Activated T-helper 1 cell treated with anti-CD3 and anti-CD28 coated beads, Interleukin-12 subunit alpha, Interleukin-12 subunit beta, Interleukin-2, Interleukin-4 antibody, amounts not matched to agents 30 ng/mL and 10 ng/mL and 1 ng/mL, durations not matched to agents 14 hours and 24 hours and 36 hours (primary cell): ENCODE measurements at regions of chr2 and their contacts with region 1.

Region 1: DNA sequence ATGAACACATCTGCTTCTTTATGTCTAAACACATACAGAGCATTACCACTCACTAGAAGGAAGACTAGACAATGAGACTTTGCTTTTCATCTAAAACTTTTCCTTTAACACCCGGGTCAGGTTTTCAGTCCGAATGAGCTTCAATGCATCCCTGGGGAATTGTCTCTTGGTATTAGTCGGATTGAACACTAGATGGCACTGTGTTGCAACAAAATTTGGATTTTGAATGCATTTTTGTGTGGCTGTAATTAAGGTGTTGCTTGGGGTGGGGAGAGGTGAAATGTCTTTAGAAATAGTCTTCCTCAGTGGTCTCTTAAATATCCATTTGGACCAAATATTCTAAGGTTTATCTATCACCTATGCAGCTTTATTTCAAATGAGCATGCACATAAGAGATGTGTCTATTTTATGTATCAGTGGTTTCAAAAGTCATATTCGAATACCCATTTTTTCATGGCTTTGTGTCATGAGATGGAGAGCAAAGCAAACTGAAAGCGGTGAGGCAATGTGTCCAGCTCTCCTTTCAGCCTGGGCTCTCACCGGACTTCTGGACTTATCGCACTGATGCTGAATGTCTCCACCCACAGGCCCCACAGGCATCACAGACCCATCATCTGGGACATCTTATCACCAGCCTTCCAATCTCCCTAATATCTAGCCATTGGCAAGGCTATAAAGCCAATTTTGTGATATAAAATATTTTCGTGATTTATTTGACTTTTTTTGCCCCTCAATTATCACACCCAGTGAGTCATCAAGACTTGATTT is 510.3 kb downstream of the RNF144A start:
- DNase-seq: peak; percentile 36
- H3K4me3 Mint-ChIP-seq: peak overlapping the region; percentile 2
- H3K27ac Mint-ChIP-seq: peak overlapping the region; percentile 69
- H3K4me1 Mint-ChIP-seq: peaks cover 48% of the 10 kb centered on the region
- H3K27me3 Mint-ChIP-seq: peaks cover 3% of the 10 kb centered on the region

Region 2: DNA sequence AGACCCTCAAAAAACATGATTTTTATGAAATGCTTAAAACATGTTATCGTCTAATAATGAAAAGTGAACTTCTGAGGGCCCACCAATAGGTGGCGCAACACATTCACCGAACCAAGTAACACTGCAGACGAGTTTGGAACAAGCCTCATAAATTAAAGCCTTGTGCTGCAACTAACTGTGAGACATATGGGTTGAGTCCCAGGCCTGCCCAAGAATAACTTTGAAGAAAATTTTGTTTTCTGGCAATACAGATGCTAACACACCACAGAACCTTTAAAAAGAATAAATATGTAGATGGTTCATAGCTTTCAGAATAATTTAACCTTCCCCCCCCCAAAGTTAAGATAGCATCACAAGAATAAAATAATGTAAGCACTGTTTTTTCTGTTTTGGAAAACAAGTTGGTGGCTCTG is 224.4 kb before region 1 on chr2:
- intact Hi-C with region 1: loop called (anchors 2 kb)
- DNase-seq: peak; percentile 27
- H3K4me3 Mint-ChIP-seq: no peak overlapping the region
- H3K27ac Mint-ChIP-seq: no peak overlapping the region
- H3K4me1 Mint-ChIP-seq: peaks cover 4% of the 10 kb centered on the region
- H3K27me3 Mint-ChIP-seq: peaks cover 4% of the 10 kb centered on the region

Region 3: GRCh38 chr2:7517088-7517487 is 89.6 kb after region 1 on chr2:
- intact Hi-C with region 1: loop called (anchors 2 kb)
- DNase-seq: peak; percentile 13
- H3K4me3 Mint-ChIP-seq: peak overlapping the region; percentile 34
- H3K27ac Mint-ChIP-seq: peak overlapping the region; percentile 84
- H3K4me1 Mint-ChIP-seq: peaks cover 67% of the 10 kb centered on the region
- H3K27me3 Mint-ChIP-seq: no peaks in the 10 kb centered on the region

Region 4: GRCh38 chr2:7672027-7672684 is 244.7 kb after region 1 on chr2:
- intact Hi-C with region 1: loop called (anchors 1 kb)
- DNase-seq: peak; percentile 43
- H3K4me3 Mint-ChIP-seq: peak overlapping the region; percentile 71
- H3K27ac Mint-ChIP-seq: peak overlapping the region; percentile 93
- H3K4me1 Mint-ChIP-seq: peaks cover 79% of the 10 kb centered on the region
- H3K27me3 Mint-ChIP-seq: no peaks in the 10 kb centered on the region

Region 5: GRCh38 chr2:7744827-7745226 is 317.4 kb after region 1 on chr2:
- intact Hi-C with region 1: loop called (anchors 5 kb)
- DNase-seq: peak; percentile 35
- H3K4me3 Mint-ChIP-seq: peak overlapping the region; percentile 8
- H3K27ac Mint-ChIP-seq: peak overlapping the region; percentile 81
- H3K4me1 Mint-ChIP-seq: peaks cover 44% of the 10 kb centered on the region
- H3K27me3 Mint-ChIP-seq: no peaks in the 10 kb centered on the region

Region 6: DNA sequence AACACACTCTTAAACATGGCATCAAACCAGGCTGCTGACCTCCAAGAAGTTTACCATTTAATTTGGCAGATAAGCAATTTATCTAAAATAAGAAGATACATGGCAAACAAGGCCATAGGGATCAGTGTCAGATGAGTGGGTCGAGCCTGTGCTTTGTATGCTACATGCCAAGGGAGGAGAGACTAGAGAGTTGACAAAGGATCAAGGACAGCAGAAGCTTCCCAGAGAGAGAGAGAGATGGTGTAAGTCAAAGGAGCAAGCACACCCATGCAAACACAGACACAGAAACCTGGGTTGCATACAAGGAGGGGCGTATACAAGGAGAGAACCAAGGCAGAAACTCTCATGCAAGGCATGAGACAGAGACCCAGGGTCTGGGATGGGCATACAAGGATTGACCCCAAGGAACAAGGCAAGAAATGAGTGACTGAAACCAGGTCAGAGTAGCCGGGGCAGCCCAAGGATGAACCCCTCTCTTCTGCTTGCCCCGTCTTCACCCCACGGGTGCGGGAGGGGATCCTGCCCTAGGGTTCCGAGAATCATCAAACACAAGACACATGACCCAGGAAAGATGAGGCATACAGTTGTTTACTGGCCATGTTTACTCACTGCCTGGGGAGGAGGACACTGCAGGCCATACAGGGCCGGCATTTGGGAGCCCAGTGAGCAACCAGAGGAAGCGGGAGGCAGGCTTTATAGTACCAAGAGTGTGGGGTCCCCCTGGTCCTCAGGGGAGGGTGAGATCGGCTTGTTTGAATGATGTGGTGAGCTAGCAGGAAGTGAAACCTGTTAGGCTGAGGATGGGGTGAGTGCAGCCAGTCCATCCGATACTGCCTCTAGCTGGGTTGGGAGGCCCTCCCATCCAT is 725.1 kb after region 1 on chr2:
- intact Hi-C with region 1: loop called (anchors 2 kb)
- DNase-seq: no peak
- H3K4me3 Mint-ChIP-seq: no peak overlapping the region
- H3K27ac Mint-ChIP-seq: peak overlapping the region; percentile 62
- H3K4me1 Mint-ChIP-seq: peaks cover 38% of the 10 kb centered on the region
- H3K27me3 Mint-ChIP-seq: no peaks in the 10 kb centered on the region